ENCODE measurements at regions of chr4 and their contacts with region 1.

Region 1: GRCh38 chr4:20684852-20685763 is 15.2 kb upstream of the PACRGL start:
- DNase-seq: no peak
- ATAC-seq: no peak
- H3K4me3 ChIP-seq: no peak overlapping the region
- H3K27ac ChIP-seq: no peak overlapping the region
- H3K4me1 ChIP-seq: no peaks in the 10 kb centered on the region
- H3K27me3 ChIP-seq: peaks cover 0 to 27% (median 7%) of the 10 kb centered on the region in 7 donors
- CTCF ChIP-seq: peak; percentile 38 to 79 (median 64)

Region 2: GRCh38 chr4:18689308-18690115 is 1995.6 kb before region 1 on chr4:
- intact Hi-C with region 1: loop called in 7 of 10 experiments (anchors 5 to 10 kb)
- DNase-seq: peak in 1 of 2 donors; percentile 41
- ATAC-seq: peak in 5 of 8 donors; percentile 46 to 67 (median 63)
- H3K4me3 ChIP-seq: no peak overlapping the region
- H3K27ac ChIP-seq: no peak overlapping the region
- H3K4me1 ChIP-seq: peaks cover 0 to 9% (median 0%) of the 10 kb centered on the region in 9 donors
- H3K27me3 ChIP-seq: no peaks in the 10 kb centered on the region
- CTCF ChIP-seq: peak; percentile 74 to 91 (median 86)

Region 3: DNA sequence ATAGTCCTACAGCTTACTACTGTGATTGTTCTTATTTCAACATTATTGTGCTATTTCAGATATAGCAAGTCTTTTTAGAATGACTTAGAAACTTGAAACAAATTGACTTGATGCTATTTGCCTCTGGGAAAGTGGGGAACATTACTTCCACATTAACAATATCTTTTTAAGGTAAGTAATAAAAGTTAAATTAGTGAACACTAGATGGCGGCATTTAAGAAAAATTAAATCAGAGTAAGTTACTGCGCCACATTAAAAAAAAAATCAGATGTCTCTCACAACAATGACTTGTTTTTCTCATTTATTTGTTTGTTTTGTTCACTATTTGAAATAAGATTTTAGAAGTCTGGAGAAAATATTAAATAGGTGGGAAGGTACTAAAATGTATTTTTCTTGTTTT is 1460.3 kb before region 1 on chr4:
- intact Hi-C with region 1: loop called in 5 of 10 experiments (anchors 10 kb)
- DNase-seq: no peak
- ATAC-seq: no peak
- H3K4me3 ChIP-seq: no peak overlapping the region
- H3K27ac ChIP-seq: no peak overlapping the region
- H3K4me1 ChIP-seq: no peaks in the 10 kb centered on the region
- H3K27me3 ChIP-seq: no peaks in the 10 kb centered on the region
- CTCF ChIP-seq: peak in 8 of 9 donors; percentile 19 to 62 (median 46)

Region 4: DNA sequence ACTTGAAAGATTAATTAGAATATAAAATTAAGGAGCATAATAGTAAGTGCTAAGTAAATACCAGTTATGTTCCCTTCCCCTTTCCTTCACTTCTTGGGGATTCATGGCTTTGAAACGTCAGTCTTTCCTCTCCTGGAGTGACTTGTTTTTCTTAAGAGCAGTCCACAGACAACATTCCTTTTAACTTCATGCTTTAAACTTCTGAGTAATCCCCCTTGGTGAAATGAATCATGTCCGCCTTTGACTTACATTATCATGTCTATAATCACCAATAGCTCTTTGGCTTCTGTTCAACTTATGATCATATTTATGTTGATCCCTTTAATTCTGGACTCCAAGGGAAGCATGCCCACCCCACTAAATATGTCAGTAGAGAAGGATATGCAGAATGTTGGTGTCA is 1445.5 kb before region 1 on chr4:
- intact Hi-C with region 1: loop called in 1 of 10 experiments (anchors 10 kb)
- DNase-seq: no peak
- ATAC-seq: no peak
- H3K4me3 ChIP-seq: no peak overlapping the region
- H3K27ac ChIP-seq: no peak overlapping the region
- H3K4me1 ChIP-seq: no peaks in the 10 kb centered on the region
- H3K27me3 ChIP-seq: no peaks in the 10 kb centered on the region
- CTCF ChIP-seq: no peak

Region 5: GRCh38 chr4:20299515-20299914 is 385.6 kb before region 1 on chr4:
- intact Hi-C with region 1: loop called in 1 of 10 experiments (anchors 10 kb)
- DNase-seq: no peak
- ATAC-seq: no peak
- H3K4me3 ChIP-seq: no peak overlapping the region
- H3K27ac ChIP-seq: no peak overlapping the region
- H3K4me1 ChIP-seq: no peaks in the 10 kb centered on the region
- H3K27me3 ChIP-seq: no peaks in the 10 kb centered on the region
- CTCF ChIP-seq: peak in 6 of 9 donors; percentile 23 to 52 (median 36)

Region 6: DNA sequence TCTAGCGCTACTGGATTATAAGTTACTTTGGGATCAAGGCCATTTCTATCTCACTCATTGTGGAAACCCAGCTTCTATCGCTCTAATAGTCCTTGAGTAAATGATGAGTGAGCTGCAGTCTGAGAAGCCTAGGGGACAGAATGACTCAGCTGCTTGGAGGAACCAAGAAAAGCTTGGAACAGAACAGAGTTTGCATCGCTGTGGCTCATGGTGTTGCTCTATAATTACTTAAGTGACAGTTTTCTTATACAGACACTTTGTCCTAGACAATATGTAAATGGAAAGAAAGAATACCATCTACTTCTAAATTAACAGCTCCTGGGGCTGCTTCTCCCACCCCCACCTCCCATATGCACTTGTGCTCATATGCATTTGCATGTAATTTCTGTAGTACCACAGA is 276.5 kb before region 1 on chr4:
- intact Hi-C with region 1: loop called in 1 of 10 experiments (anchors 10 kb)
- DNase-seq: no peak
- ATAC-seq: peak in 3 of 8 donors; percentile 46 to 75 (median 65)
- H3K4me3 ChIP-seq: no peak overlapping the region
- H3K27ac ChIP-seq: no peak overlapping the region
- H3K4me1 ChIP-seq: peaks cover 0 to 7% (median 0%) of the 10 kb centered on the region in 9 donors
- H3K27me3 ChIP-seq: no peaks in the 10 kb centered on the region
- CTCF ChIP-seq: no peak

Region 7: GRCh38 chr4:20422398-20422797 is 262.7 kb before region 1 on chr4:
- intact Hi-C with region 1: loop called in 8 of 10 experiments (anchors 2 to 10 kb)
- DNase-seq: peak in 1 of 2 donors; percentile 8
- ATAC-seq: peak in 4 of 8 donors; percentile 33 to 83 (median 62)
- H3K4me3 ChIP-seq: no peak overlapping the region
- H3K27ac ChIP-seq: no peak overlapping the region
- H3K4me1 ChIP-seq: peaks cover 0 to 11% (median 0%) of the 10 kb centered on the region in 9 donors
- H3K27me3 ChIP-seq: no peaks in the 10 kb centered on the region
- CTCF ChIP-seq: peak in 8 of 9 donors; percentile 12 to 60 (median 43)